ENCODE measurements at regions of chr5 and their contacts with region 1.

Region 1: GRCh38 chr5:75053304-75054133 is 1.2 kb upstream of the GCNT4 start:
- DNase-seq: peak; percentile 36
- H3K4me3 Mint-ChIP-seq: peak overlapping the region; percentile 80
- H3K27ac Mint-ChIP-seq: no peak overlapping the region
- H3K4me1 Mint-ChIP-seq: peaks cover 42% of the 10 kb centered on the region
- H3K27me3 Mint-ChIP-seq: peaks cover 48% of the 10 kb centered on the region

Region 2: GRCh38 chr5:73902327-73903051 is 1151.0 kb before region 1 on chr5:
- intact Hi-C with region 1: loop called (anchors 5 kb)
- DNase-seq: no peak
- H3K4me3 Mint-ChIP-seq: no peak overlapping the region
- H3K27ac Mint-ChIP-seq: no peak overlapping the region
- H3K4me1 Mint-ChIP-seq: peaks cover 17% of the 10 kb centered on the region
- H3K27me3 Mint-ChIP-seq: peaks cover 45% of the 10 kb centered on the region

Region 3: GRCh38 chr5:74766849-74767578 is 286.5 kb before region 1 on chr5 and contains the starts of genes GFM2 and NSA2:
- intact Hi-C with region 1: loop called (anchors 5 kb)
- DNase-seq: peak; percentile 91
- H3K4me3 Mint-ChIP-seq: peak within 1 kb of the TSS; percentile 100
- H3K27ac Mint-ChIP-seq: peak within 1 kb of the TSS; percentile 98
- H3K4me1 Mint-ChIP-seq: peaks cover 29% of the 10 kb centered on the region
- H3K27me3 Mint-ChIP-seq: no peaks in the 10 kb centered on the region
- total RNA-seq, gene GFM2: 32.9 and 34.6 TPM in 2 replicates
- total RNA-seq, gene NSA2: 83.9 and 91.4 TPM in 2 replicates

Region 4: GRCh38 chr5:75236322-75237316 is 183.1 kb after region 1 on chr5 and contains the start of gene ANKRD31:
- intact Hi-C with region 1: loop called (anchors 2 kb)
- DNase-seq: peak; percentile 83
- H3K4me3 Mint-ChIP-seq: peak within 1 kb of the TSS; percentile 91
- H3K27ac Mint-ChIP-seq: peak within 1 kb of the TSS; percentile 88
- H3K4me1 Mint-ChIP-seq: peaks cover 8% of the 10 kb centered on the region
- H3K27me3 Mint-ChIP-seq: no peaks in the 10 kb centered on the region
- total RNA-seq, gene ANKRD31: 0.11 and 0.28 TPM in 2 replicates

Region 5: GRCh38 chr5:75511435-75512384 is 458.2 kb after region 1 on chr5 and contains the starts of genes CERT1 and POLK:
- intact Hi-C with region 1: loop called (anchors 2 kb)
- DNase-seq: peak; percentile 95
- H3K4me3 Mint-ChIP-seq: peak within 1 kb of the TSS; percentile 100
- H3K27ac Mint-ChIP-seq: peak within 1 kb of the TSS; percentile 90
- H3K4me1 Mint-ChIP-seq: peaks cover 51% of the 10 kb centered on the region
- H3K27me3 Mint-ChIP-seq: no peaks in the 10 kb centered on the region
- total RNA-seq, gene CERT1: 38.6 and 43.7 TPM in 2 replicates
- total RNA-seq, gene POLK: 41.4 and 42.6 TPM in 2 replicates

Region 6: GRCh38 chr5:75717082-75717922 is 663.8 kb after region 1 on chr5 and contains the start of gene POC5:
- intact Hi-C with region 1: loop called (anchors 5 kb)
- DNase-seq: peak; percentile 97
- H3K4me3 Mint-ChIP-seq: peak within 1 kb of the TSS; percentile 100
- H3K27ac Mint-ChIP-seq: peak within 1 kb of the TSS; percentile 100
- H3K4me1 Mint-ChIP-seq: peaks cover 29% of the 10 kb centered on the region
- H3K27me3 Mint-ChIP-seq: peaks cover 10% of the 10 kb centered on the region
- total RNA-seq, gene POC5: 16.2 and 16.5 TPM in 2 replicates

Measured in activated T-helper 2 cell treated with anti-CD3 and anti-CD28 coated beads, Interferon-gamma antibody, Interleukin-2, Interleukin-4, amounts not matched to agents 10 μg/mL and 5 μg/mL and 100 μg/mL, durations not matched to agents 14 hours and 24 hours and 36 hours (primary cell).